Panc1 (cell line): ENCODE measurements at regions of chr16 and their contacts with region 1.

Region 1: GRCh38 chr16:15643048-15643945 is at the start of gene MARF1:
- DNase-seq: peak; percentile 67
- ATAC-seq: peak; percentile 84
- H3K4me3 ChIP-seq: peak within 1 kb of the TSS; percentile 68 to 82
- H3K27ac ChIP-seq: peak within 1 kb of the TSS; percentile 99
- H3K4me1 ChIP-seq: peaks cover 46% of the 10 kb centered on the region
- H3K27me3 ChIP-seq: no peaks in the 10 kb centered on the region
- CTCF ChIP-seq: peak; percentile 75
- total RNA-seq, gene MARF1: 51.5 TPM

Region 2: DNA sequence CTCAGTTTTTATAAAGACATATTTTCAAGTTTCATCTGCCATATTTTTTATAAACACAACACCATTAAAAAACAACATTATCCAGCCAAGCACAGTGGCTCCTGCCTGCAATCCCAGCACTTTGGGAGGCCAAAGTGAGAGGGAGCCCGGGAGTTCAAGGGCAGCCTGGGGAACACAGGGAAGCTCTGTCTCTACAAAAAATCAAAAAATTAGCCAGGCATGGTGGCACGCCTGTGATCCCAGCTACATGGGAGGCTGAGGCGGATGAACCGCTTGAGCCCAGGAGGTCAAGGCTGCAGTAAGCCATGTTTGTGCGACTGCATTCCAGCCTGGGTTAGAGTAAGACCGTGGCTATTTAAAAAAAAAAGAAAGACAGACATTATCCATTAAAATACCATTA is 570.2 kb before region 1 on chr16:
- CTCF ChIA-PET with region 1: no interaction called
- POLR2A ChIA-PET with region 1: interaction called, 22 read pairs
- in situ Hi-C with region 1: no loop called
- intact Hi-C with region 1: no loop called
- DNase-seq: no peak
- ATAC-seq: no peak; the same call in 1 of the 2 replicates
- H3K4me3 ChIP-seq: no peak overlapping the region
- H3K27ac ChIP-seq: no peak overlapping the region
- H3K4me1 ChIP-seq: no peaks in the 10 kb centered on the region
- H3K27me3 ChIP-seq: no peaks in the 10 kb centered on the region
- CTCF ChIP-seq: no peak

Region 3: DNA sequence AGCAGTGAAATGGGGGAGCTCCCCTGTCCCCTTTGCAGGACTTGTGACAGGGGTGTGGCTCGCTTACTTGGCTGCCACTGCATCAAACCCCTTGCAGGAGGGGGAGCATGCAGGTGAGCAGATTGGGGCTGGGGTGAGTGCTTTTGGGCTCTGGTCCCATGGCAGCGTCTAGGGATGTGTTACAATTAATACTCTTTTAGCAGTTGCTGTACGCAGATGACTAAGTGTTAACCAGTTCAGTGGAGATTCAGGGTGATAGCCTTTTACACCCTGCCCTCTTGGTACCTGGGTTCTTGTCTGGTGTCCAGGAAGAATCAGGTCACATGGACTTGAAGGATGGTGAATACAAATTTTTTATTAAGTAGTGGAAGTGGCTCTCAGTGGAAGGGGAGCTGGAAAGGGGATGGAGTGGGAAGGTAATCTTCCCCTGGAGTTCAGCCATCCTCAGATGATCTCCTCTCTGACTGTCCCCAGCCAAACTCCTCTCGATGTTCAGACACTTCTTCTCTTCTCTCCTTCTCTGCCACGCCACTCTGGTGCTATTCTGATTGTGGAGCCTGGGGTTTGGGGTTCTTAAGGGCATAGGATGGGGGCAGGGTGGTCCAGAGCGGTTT is 100.5 kb before region 1 on chr16:
- CTCF ChIA-PET with region 1: no interaction called
- POLR2A ChIA-PET with region 1: no interaction called
- in situ Hi-C with region 1: no loop called
- intact Hi-C with region 1: no loop called
- DNase-seq: no peak
- ATAC-seq: no peak
- H3K4me3 ChIP-seq: no peak overlapping the region
- H3K27ac ChIP-seq: no peak overlapping the region
- H3K4me1 ChIP-seq: no peaks in the 10 kb centered on the region
- H3K27me3 ChIP-seq: no peaks in the 10 kb centered on the region
- CTCF ChIP-seq: no peak